ENCODE measurements at regions of chr12 and their contacts with region 1.

Region 1: GRCh38 chr12:46342562-46343033 is 30.0 kb downstream of the SLC38A2 start:
- DNase-seq: peak in 1 of 2 donors; percentile 69
- ATAC-seq: peak; percentile 46 to 80 (median 63)
- H3K4me3 ChIP-seq: no peak overlapping the region
- H3K4me3 Mint-ChIP-seq: no peak overlapping the region
- H3K27ac ChIP-seq: no peak overlapping the region
- H3K27ac Mint-ChIP-seq: no peak overlapping the region
- H3K4me1 ChIP-seq: no peaks in the 10 kb centered on the region
- H3K4me1 Mint-ChIP-seq: peaks cover 0 to 4% of the 10 kb centered on the region in 2 donors
- H3K27me3 ChIP-seq: no peaks in the 10 kb centered on the region
- H3K27me3 Mint-ChIP-seq: peaks cover 8 to 19% of the 10 kb centered on the region in 2 donors
- CTCF ChIP-seq: peak; percentile 66

Region 2: GRCh38 chr12:46933947-46934346 is 591.3 kb after region 1 on chr12:
- intact Hi-C with region 1: loop called (anchors 1 kb)
- DNase-seq: peak in 1 of 2 donors; percentile 47
- ATAC-seq: peak in 1 of 3 donors; percentile 45
- H3K4me3 ChIP-seq: no peak overlapping the region
- H3K4me3 Mint-ChIP-seq: no peak overlapping the region
- H3K27ac ChIP-seq: no peak overlapping the region
- H3K27ac Mint-ChIP-seq: no peak overlapping the region
- H3K4me1 ChIP-seq: no peaks in the 10 kb centered on the region
- H3K4me1 Mint-ChIP-seq: no peaks in the 10 kb centered on the region
- H3K27me3 ChIP-seq: peaks cover 5% of the 10 kb centered on the region
- H3K27me3 Mint-ChIP-seq: peaks cover 21 to 46% of the 10 kb centered on the region in 2 donors
- CTCF ChIP-seq: peak; percentile 32

Region 3: GRCh38 chr12:46983393-46984266 is 641.0 kb after region 1 on chr12:
- intact Hi-C with region 1: loop called (anchors 1 kb)
- DNase-seq: peak in 1 of 2 donors; percentile 64
- ATAC-seq: peak; percentile 69 to 86 (median 72)
- H3K4me3 ChIP-seq: no peak overlapping the region
- H3K4me3 Mint-ChIP-seq: no peak overlapping the region
- H3K27ac ChIP-seq: no peak overlapping the region
- H3K27ac Mint-ChIP-seq: no peak overlapping the region
- H3K4me1 ChIP-seq: no peaks in the 10 kb centered on the region
- H3K4me1 Mint-ChIP-seq: peaks cover 0 to 6% of the 10 kb centered on the region in 2 donors
- H3K27me3 ChIP-seq: peaks cover 2% of the 10 kb centered on the region
- H3K27me3 Mint-ChIP-seq: peaks cover 34 to 47% of the 10 kb centered on the region in 2 donors
- CTCF ChIP-seq: peak; percentile 74

Region 4: DNA sequence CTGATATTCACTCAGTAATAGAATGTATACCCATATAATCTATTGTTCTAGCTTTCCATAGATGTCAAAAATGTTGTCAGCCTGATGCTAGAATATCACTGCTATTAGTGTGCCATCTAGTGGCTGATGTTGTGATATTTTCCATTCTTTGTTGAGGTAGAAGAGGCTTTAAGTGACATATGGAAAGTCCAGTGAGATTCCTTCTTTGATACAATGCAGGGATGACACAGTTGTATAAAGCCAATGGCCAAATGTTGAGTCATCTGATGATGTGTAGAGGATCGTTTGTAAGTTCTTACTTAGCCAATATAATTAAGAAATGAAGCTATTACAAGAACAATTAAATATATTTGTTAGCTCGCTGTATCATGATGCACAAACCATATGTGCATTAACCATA is 678.7 kb after region 1 on chr12:
- intact Hi-C with region 1: loop called (anchors 1 kb)
- DNase-seq: peak in 1 of 2 donors; percentile 74
- ATAC-seq: peak; percentile 52 to 71 (median 67)
- H3K4me3 ChIP-seq: no peak overlapping the region
- H3K4me3 Mint-ChIP-seq: no peak overlapping the region
- H3K27ac ChIP-seq: no peak overlapping the region
- H3K27ac Mint-ChIP-seq: no peak overlapping the region
- H3K4me1 ChIP-seq: no peaks in the 10 kb centered on the region
- H3K4me1 Mint-ChIP-seq: no peaks in the 10 kb centered on the region
- H3K27me3 ChIP-seq: no peaks in the 10 kb centered on the region
- H3K27me3 Mint-ChIP-seq: peaks cover 34 to 50% of the 10 kb centered on the region in 2 donors
- CTCF ChIP-seq: peak; percentile 87

Measured in natural killer cell (primary cell).